WTC11 (cell line): ENCODE measurements at regions of chr7 and their contacts with region 1.

Region 1: DNA sequence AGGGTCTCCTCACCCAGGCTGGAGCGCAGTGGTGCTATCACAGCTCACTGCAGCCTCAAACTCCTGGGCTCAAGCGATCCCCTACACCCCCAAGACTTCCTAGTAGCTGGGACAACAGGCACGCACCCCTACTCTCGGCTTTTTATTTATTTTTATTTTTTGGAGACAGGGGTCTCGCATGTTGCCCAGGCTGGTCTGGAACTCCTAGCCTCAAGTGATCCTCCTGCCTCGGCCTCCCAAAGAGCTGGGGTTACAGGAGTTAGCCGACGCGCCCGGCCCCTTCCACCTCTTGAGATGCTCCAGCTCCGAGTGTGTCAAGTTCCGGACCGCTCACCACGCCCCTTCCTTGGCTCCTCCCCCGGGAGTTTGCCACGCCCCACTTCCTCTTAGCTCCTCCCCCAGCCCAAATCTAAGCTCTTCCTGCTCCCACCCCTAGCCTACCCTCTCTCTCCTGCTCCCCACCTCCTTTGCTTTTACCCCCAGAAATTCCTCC is 6.3 kb downstream of the NAT16 start:
- DNase-seq: peak; percentile 91
- ATAC-seq: peak; percentile 71
- H3K4me3 Mint-ChIP-seq: peak overlapping the region; percentile 74
- H3K27ac Mint-ChIP-seq: no peak overlapping the region
- H3K4me1 Mint-ChIP-seq: peaks cover 43% of the 10 kb centered on the region
- H3K27me3 Mint-ChIP-seq: peaks cover 100% of the 10 kb centered on the region
- CTCF ChIP-seq: no peak

Region 2: DNA sequence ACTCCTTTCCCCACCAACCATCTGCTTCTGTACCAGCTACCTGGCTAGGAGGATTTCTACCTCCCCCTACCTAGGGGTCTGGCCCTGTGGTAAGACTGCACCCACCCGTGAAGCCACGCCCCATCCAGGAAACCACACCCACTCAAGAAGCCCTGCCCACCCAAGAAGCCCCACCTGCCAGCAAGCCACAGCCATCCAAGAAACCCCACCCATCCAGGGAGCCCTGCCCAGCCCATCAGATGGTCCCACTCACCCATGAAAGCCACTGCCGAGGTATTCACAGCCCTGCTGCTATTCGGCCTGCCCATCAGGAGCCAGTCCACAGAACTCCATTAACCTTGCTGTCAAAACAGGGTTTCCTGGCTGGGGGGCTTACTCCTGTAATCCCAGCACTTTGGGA is 240.1 kb before region 1 on chr7:
- CTCF ChIA-PET with region 1: no interaction called
- POLR2A ChIA-PET with region 1: no interaction called
- DNase-seq: peak; percentile 54
- ATAC-seq: peak; percentile 85
- H3K4me3 Mint-ChIP-seq: no peak overlapping the region
- H3K27ac Mint-ChIP-seq: no peak overlapping the region
- H3K4me1 Mint-ChIP-seq: peaks cover 22% of the 10 kb centered on the region
- H3K27me3 Mint-ChIP-seq: no peaks in the 10 kb centered on the region; the same call in none of the 2 replicates
- CTCF ChIP-seq: no peak

Region 3: GRCh38 chr7:101159696-101160654 is 13.8 kb before region 1 on chr7:
- CTCF ChIA-PET with region 1: interaction called, 21 read pairs
- POLR2A ChIA-PET with region 1: interaction called, 14 read pairs
- DNase-seq: no peak
- ATAC-seq: no peak
- H3K4me3 Mint-ChIP-seq: no peak overlapping the region
- H3K27ac Mint-ChIP-seq: no peak overlapping the region
- H3K4me1 Mint-ChIP-seq: peaks cover 60% of the 10 kb centered on the region
- H3K27me3 Mint-ChIP-seq: peaks cover 16% of the 10 kb centered on the region
- CTCF ChIP-seq: no peak

Region 4: GRCh38 chr7:101185258-101185839 is 11.6 kb after region 1 on chr7:
- CTCF ChIA-PET with region 1: interaction called, 86 read pairs
- POLR2A ChIA-PET with region 1: interaction called, 4 read pairs
- DNase-seq: no peak
- ATAC-seq: no peak
- H3K4me3 Mint-ChIP-seq: no peak overlapping the region
- H3K27ac Mint-ChIP-seq: no peak overlapping the region
- H3K4me1 Mint-ChIP-seq: peaks cover 12% of the 10 kb centered on the region
- H3K27me3 Mint-ChIP-seq: peaks cover 24% of the 10 kb centered on the region
- CTCF ChIP-seq: no peak

Region 5: DNA sequence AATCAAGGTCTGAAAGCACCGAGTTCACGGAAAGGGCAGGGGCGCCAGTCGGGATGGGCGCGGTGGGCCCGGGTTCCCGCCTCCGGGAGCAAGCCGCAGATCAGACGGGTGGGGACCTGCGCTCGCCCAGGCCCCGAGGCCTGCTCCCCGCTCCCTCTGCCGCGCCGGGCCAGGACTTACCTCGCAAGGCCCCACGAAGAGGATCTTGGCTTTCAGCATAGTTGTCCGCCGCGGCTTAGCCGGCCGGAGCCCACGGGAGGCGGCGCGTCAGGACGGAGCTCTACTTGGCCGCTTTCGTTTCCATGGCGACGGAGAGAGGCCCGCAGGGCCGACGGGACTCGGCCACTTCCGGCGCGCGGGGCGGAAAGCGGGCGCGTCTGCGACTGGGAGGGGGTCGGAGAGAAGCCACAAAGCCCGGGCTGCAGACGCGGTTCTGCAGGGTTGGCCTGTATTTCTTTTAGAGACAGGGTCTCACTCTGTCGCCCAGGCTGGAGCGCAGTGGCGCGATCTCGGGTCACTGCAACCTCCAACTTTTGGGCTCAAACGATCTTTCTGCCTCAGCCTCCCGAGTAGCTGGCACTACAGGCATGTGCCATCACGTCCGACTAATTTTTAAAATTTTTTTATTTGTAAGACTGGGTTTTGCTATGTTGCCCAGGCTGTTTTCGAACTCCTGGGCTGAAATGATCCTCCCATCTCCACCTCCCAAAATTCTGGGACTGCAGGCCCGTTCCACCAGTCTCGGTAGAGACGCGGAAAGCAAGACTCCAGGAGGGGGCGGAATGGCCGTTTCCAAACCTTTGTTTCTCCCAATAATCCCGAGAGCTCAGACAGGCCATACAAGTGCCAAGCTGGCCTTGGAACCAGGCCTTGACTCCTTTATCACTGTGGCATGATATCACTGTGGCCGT is 147.9 kb after region 1 on chr7 and contains the start of gene IFT22:
- CTCF ChIA-PET with region 1: no interaction called
- POLR2A ChIA-PET with region 1: no interaction called
- DNase-seq: peak; percentile 90
- ATAC-seq: peak; percentile 92
- H3K4me3 Mint-ChIP-seq: peak within 1 kb of the TSS; percentile 93
- H3K27ac Mint-ChIP-seq: peak within 1 kb of the TSS; percentile 96
- H3K4me1 Mint-ChIP-seq: peaks cover 12% of the 10 kb centered on the region
- H3K27me3 Mint-ChIP-seq: no peaks in the 10 kb centered on the region
- CTCF ChIP-seq: no peak
- total RNA-seq, gene IFT22: 13.7 to 16.6 TPM (median 15.5 TPM) in 3 replicates